Dorsolateral prefrontal cortex (tissue), 120 donors: ENCODE measurements at regions of chr9 and their contacts with region 1.

Region 1: GRCh38 chr9:109012876-109013678 is at the start of gene CTNNAL1:
- DNase-seq: peak; percentile 83 to 92 (median 85)
- H3K4me3 ChIP-seq: peak within 1 kb of the TSS; percentile 59 to 99 (median 88)
- H3K27ac ChIP-seq: peak within 1 kb of the TSS; percentile 26 to 95 (median 86)
- H3K27me3 ChIP-seq: no peaks in the 10 kb centered on the region
- CTCF ChIP-seq: peak in 13 of 56 donors; percentile 9 to 49 (median 15)
- total RNA-seq, gene CTNNAL1: 7.8 to 37.8 (median 17.6) TPM

Region 2: DNA sequence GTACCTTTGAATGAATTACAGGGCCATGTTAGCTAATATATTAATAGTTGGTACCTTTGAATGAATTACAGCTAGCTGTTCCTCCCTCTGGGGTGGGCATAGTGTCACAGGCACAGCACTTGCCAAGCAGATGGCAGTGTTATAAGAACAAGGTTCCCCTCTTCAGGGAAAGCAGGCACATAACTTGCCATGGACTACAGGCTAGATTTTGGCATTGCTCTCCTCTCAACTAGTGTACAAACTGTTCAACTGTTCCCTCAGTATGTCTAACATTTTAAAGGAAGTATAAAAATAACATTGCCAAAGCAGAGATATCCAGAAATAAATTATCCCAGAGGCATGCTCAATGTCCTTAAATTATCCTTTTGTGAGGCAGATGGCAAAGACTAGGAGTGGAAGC is 45.2 kb before region 1 on chr9:
- intact Hi-C with region 1: loop called in 1 of 2 experiments (anchors 5 kb)
- DNase-seq: peak in 2 of 10 donors; percentile 38 to 41
- H3K4me3 ChIP-seq: no peak overlapping the region
- H3K27ac ChIP-seq: peak overlapping the region in 23 of 59 donors; percentile 0 to 71 (median 43)
- H3K27me3 ChIP-seq: no peaks in the 10 kb centered on the region
- CTCF ChIP-seq: peak in 1 of 56 donors; percentile 8

Region 3: DNA sequence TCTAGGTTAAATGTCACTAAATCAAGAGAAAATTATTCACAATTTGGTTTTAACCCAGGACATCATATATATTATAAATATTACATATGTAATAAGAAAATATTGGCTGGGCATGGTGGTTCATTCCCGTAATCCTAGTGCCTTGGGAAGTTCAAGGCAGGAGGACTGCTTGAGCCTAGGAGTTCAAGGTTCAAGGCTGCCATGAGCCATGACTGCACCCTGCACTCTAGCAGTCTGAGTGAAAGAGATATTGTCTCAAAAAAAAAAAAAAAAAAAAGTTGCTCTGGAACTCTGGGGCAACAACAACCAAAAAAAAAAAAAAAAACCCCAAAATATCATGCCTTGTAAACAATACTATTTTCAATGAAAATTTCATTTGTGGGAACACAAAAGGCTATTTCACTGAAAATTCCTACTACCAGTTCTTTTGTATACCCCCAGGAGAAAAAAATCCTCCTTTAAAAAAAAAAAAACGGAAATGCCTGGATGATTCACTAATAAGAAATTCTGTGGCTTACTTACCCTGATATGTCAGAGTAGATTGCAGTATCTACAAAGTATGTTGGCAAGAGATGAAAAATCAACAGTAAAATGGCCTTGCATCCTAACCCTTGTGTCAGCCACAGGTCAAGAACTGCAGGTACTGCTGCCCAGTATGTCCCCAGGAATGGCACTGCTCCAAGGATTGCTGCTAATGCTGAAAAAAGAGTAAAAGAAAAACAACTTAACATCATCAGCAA is 22.8 kb after region 1 on chr9:
- intact Hi-C with region 1: no loop called
- DNase-seq: no peak
- H3K4me3 ChIP-seq: no peak overlapping the region
- H3K27ac ChIP-seq: peak overlapping the region in 12 of 59 donors; percentile 2 to 65 (median 21)
- H3K27me3 ChIP-seq: no peaks in the 10 kb centered on the region
- CTCF ChIP-seq: no peak

Region 4: GRCh38 chr9:109119439-109120203 is 106.5 kb after region 1 on chr9 and contains the start of gene TMEM245:
- intact Hi-C with region 1: loop called (anchors 2 to 5 kb)
- DNase-seq: peak; percentile 94 to 99 (median 98)
- H3K4me3 ChIP-seq: peak within 1 kb of the TSS; percentile 66 to 99 (median 89)
- H3K27ac ChIP-seq: peak within 1 kb of the TSS in 57 of 59 donors; percentile 49 to 95 (median 86)
- H3K27me3 ChIP-seq: no peaks in the 10 kb centered on the region
- CTCF ChIP-seq: peak in 37 of 56 donors; percentile 4 to 53 (median 24)
- total RNA-seq, gene TMEM245: 53.4 to 104 (median 72.3) TPM